ENCODE measurements at regions of chr16 and their contacts with region 1.

Region 1: DNA sequence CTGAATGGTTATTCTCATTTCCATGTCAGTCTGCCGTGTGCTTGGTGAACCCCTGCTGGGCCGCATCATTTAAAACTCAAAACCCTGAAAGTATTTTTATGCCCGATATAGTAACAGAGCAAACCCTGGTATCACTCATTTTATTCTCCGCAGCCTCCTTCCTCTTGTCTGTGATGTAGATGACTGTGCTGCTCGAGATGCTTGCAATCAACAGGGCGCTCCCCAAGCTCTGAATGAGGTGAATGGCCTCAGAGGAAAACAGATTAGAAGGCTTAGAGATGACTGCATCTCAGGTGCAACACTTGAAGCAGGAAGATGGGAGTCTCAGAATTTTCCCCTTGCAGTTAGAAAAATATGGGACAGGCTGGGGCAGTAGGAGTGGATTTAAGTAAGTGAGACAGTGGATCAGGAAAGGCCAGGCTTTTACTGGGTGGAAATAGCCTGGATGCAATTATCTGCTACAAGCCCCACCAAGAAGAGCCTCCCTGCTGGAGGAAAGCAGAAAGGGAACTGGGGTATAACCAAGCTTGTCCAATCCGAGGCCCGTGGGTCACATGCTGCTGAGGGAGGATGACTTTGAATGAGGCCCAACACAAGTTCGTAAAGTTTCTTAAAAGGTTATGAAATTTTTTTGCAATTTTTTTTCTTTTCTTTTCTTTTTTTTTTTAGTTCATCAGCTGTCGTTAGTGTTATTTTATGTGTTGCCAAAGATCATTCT is 166.9 kb downstream of the CDH13 start:
- DNase-seq: no peak
- H3K4me3 ChIP-seq: no peak overlapping the region
- H3K27ac ChIP-seq: no peak overlapping the region
- H3K4me1 ChIP-seq: no peaks in the 10 kb centered on the region
- H3K27me3 ChIP-seq: no peaks in the 10 kb centered on the region
- CTCF ChIP-seq: no peak

Region 2: GRCh38 chr16:82824408-82824807 is 30.7 kb after region 1 on chr16:
- intact Hi-C with region 1: loop called (anchors 1 kb)
- DNase-seq: no peak
- H3K4me3 ChIP-seq: no peak overlapping the region
- H3K27ac ChIP-seq: no peak overlapping the region
- H3K4me1 ChIP-seq: no peaks in the 10 kb centered on the region
- H3K27me3 ChIP-seq: no peaks in the 10 kb centered on the region
- CTCF ChIP-seq: no peak

Region 3: GRCh38 chr16:82995924-82996441 is 202.3 kb after region 1 on chr16:
- intact Hi-C with region 1: no loop called
- DNase-seq: peak in 1 of 2 donors; percentile 64
- H3K4me3 ChIP-seq: peak overlapping the region in 1 of 2 donors; percentile 29
- H3K27ac ChIP-seq: peak overlapping the region; percentile 62 to 82
- H3K4me1 ChIP-seq: peaks cover 3 to 12% of the 10 kb centered on the region in 2 donors
- H3K27me3 ChIP-seq: no peaks in the 10 kb centered on the region
- CTCF ChIP-seq: no peak